CD14-positive monocyte (primary cell): ENCODE measurements at regions of chr2 and their contacts with region 1.

Region 1: GRCh38 chr2:147045113-147045512 is 799.7 kb upstream of the ACVR2A start:
- DNase-seq: peak in 1 of 3 donors; percentile 16
- H3K4me3 ChIP-seq: no peak overlapping the region
- H3K4me3 Mint-ChIP-seq: no peak overlapping the region
- H3K27ac ChIP-seq: no peak overlapping the region
- H3K27ac Mint-ChIP-seq: no peak overlapping the region
- H3K4me1 ChIP-seq: no peaks in the 10 kb centered on the region
- H3K4me1 Mint-ChIP-seq: peaks cover 2% of the 10 kb centered on the region
- H3K27me3 ChIP-seq: no peaks in the 10 kb centered on the region
- H3K27me3 Mint-ChIP-seq: peaks cover 0 to 3% (median 1%) of the 10 kb centered on the region in 3 donors
- CTCF ChIP-seq: peak; percentile 68

Region 2: GRCh38 chr2:147904044-147904443 is 858.9 kb after region 1 on chr2:
- intact Hi-C with region 1: loop called in 1 of 2 experiments (anchors 10 kb)
- DNase-seq: no peak
- H3K4me3 ChIP-seq: no peak overlapping the region
- H3K4me3 Mint-ChIP-seq: no peak overlapping the region
- H3K27ac ChIP-seq: no peak overlapping the region
- H3K27ac Mint-ChIP-seq: no peak overlapping the region
- H3K4me1 ChIP-seq: no peaks in the 10 kb centered on the region
- H3K4me1 Mint-ChIP-seq: peaks cover 2% of the 10 kb centered on the region
- H3K27me3 ChIP-seq: no peaks in the 10 kb centered on the region
- H3K27me3 Mint-ChIP-seq: peaks cover 0 to 2% (median 0%) of the 10 kb centered on the region in 3 donors
- CTCF ChIP-seq: no peak